SK-N-SH (cell line): ENCODE measurements at regions of chr15 and their contacts with region 1.

Region 1: DNA sequence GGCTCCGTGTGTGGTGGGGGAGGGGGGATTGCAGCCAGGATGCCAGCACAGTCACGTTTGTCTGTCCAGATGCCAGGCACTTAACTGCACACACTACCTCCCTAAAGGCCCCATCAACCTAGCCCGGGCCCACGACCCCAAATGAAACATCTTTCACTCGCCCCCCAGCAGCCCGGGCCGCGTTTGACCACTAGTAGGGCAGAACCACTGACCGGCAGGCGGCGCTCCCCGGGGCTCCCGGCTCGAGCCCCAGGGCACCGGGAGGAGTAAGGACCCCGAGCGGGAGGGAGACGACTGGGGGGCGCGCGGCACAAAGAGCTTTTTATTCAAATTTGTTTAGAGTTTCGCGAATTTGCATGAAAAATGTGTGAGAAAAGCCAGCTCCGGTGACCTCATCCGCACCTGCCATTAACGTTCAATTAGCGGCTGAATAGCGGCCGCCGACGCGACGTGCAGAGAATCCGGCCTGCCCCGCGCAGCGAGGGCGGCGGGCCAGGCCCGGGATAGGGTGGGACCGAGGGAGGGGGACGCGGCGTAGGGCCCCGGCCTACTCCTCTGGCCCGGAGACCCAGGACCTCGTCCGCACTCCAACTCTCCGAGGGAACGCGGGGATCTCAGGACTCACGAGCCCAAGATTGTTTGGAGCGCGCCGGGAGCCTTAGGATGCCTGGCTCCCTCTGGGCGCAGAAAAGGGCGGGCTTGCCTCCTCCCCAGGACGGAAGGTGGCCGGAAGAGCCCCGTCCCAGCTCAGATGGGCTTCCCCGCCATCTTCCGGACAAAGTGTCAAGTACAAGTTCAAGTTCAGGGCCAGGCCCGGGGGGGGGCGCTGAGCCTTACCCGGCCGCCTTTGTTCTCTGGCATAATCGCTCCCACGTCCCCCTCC is 64.9 kb upstream of the POLG start:
- DNase-seq: peak; percentile 92
- H3K4me3 ChIP-seq: peak overlapping the region; percentile 70 to 72
- H3K27ac ChIP-seq: peak overlapping the region; percentile 59 to 94
- H3K4me1 ChIP-seq: peaks cover 0 to 22% of the 10 kb centered on the region in 2 experiments; a peak in 2 of 4 replicates
- H3K27me3 ChIP-seq: no peaks in the 10 kb centered on the region
- CTCF ChIP-seq: peak; percentile 72
- EP300 ChIP-seq: no peak
- RAD21 ChIP-seq: peak; percentile 69

Region 2: GRCh38 chr15:89367485-89368451 is 31.7 kb before region 1 on chr15:
- CTCF ChIA-PET with region 1: interaction called, 766 read pairs
- POLR2A ChIA-PET with region 1: interaction called, 19 read pairs
- DNase-seq: peak; percentile 98
- H3K4me3 ChIP-seq: peak overlapping the region; percentile 52 to 64
- H3K27ac ChIP-seq: peak overlapping the region in 1 of 2 experiments; percentile 65; a peak in 1 of 4 replicates
- H3K4me1 ChIP-seq: peaks cover 0 to 59% of the 10 kb centered on the region in 2 experiments; a peak in 1 of 4 replicates
- H3K27me3 ChIP-seq: peaks cover 17% of the 10 kb centered on the region
- CTCF ChIP-seq: no peak
- EP300 ChIP-seq: no peak
- RAD21 ChIP-seq: no peak

Region 3: GRCh38 chr15:89377836-89378295 is 21.6 kb before region 1 on chr15:
- CTCF ChIA-PET with region 1: interaction called, 11 read pairs
- POLR2A ChIA-PET with region 1: interaction called, 6 read pairs
- DNase-seq: no peak
- H3K4me3 ChIP-seq: no peak overlapping the region
- H3K27ac ChIP-seq: no peak overlapping the region
- H3K4me1 ChIP-seq: peaks cover 0 to 34% of the 10 kb centered on the region in 2 experiments; a peak in 2 of 4 replicates
- H3K27me3 ChIP-seq: no peaks in the 10 kb centered on the region
- CTCF ChIP-seq: no peak
- EP300 ChIP-seq: no peak
- RAD21 ChIP-seq: no peak

Region 4: DNA sequence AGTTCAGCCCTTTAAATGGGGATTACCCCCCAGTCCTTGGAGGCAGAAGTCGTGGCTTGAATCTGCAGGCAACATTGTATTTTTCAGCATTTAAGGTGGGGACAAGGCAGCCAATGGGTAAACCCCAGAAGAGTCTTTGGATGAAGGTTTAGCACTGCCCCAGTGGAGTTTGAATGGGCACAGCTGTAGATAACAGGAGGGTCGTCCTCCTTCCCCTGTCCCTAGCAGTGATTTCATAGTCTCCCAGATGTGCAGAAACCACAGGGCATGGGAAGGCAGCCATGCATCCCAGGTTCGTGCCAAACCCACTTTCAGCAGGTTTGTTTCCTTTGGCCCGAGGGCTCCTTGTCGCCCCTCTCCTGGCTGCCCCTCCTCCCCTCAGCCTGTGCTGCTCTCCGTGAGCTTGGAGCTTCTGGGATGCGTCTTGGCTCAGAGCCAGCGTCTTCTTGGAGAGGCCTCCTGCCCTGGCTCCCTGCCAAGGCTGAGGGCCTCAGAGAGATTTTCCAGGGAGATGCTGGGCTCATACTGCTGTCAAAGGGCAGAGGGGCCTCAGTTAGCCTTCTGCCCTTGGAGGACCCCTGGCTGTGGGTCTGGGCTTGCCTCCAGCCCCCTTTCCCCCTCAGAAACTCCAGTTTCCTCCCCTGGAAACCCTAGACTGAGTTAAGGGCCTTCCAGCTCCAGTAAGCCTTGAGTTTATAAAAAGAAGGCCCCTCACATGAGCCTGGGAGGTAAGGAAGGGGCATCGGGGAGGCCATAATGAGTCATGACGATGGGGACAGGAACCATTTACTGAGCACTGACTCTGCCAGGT is 15.9 kb before region 1 on chr15:
- CTCF ChIA-PET with region 1: interaction called, 77 read pairs
- POLR2A ChIA-PET with region 1: interaction called, 4 read pairs
- DNase-seq: peak; percentile 81
- H3K4me3 ChIP-seq: no peak overlapping the region
- H3K27ac ChIP-seq: peak overlapping the region; percentile 40 to 92; a peak in 3 of 4 replicates
- H3K4me1 ChIP-seq: peaks cover 10 to 78% of the 10 kb centered on the region in 2 experiments
- H3K27me3 ChIP-seq: no peaks in the 10 kb centered on the region
- CTCF ChIP-seq: no peak
- EP300 ChIP-seq: peak; percentile 21 to 65; a peak in 2 of 4 replicates
- RAD21 ChIP-seq: peak; percentile 7; the same call in 1 of the 2 replicates

Region 5: DNA sequence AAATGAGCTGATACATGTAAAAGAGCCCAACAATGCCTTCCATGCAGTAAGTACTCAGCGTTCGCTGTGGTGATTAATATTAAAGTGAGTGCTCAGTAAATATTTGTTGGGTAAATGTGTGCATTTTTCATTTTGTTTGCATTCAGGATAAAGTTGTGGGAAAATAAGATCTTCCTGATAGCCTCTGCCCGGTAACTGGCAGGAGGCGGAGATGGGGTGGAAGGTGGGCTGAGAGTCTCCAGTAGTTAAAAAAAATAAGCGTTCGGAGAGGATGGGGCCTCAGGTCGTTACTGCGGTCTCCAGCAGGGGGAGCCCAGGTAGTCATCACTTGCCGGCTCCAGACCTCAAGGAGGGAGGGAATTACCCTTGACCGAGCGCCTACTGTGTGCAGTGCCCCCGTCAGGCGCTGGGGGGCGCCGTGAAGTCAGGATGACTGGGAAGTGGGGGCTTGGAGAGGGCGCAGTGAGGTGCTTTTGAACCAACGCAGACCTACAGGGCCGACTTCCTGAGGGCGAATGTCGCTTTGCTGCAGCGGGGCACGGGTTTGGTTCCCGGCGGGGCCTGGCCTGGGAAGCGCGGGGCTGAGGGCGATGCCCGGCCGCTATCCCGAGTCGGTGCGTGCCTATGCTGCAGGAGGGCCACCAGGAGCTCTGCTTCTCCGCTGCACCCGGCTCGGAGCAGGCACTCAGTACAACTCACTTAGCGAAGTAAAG is 16.8 kb after region 1 on chr15:
- CTCF ChIA-PET with region 1: interaction called, 32 read pairs
- POLR2A ChIA-PET with region 1: interaction called, 3 read pairs
- DNase-seq: peak; percentile 96
- H3K4me3 ChIP-seq: peak overlapping the region in 1 of 2 experiments; percentile 60; a peak in 1 of 4 replicates
- H3K27ac ChIP-seq: no peak overlapping the region
- H3K4me1 ChIP-seq: no peaks in the 10 kb centered on the region; a peak in 1 of 4 replicates
- H3K27me3 ChIP-seq: no peaks in the 10 kb centered on the region
- CTCF ChIP-seq: peak; percentile 90
- EP300 ChIP-seq: no peak
- RAD21 ChIP-seq: peak; percentile 57

Region 6: DNA sequence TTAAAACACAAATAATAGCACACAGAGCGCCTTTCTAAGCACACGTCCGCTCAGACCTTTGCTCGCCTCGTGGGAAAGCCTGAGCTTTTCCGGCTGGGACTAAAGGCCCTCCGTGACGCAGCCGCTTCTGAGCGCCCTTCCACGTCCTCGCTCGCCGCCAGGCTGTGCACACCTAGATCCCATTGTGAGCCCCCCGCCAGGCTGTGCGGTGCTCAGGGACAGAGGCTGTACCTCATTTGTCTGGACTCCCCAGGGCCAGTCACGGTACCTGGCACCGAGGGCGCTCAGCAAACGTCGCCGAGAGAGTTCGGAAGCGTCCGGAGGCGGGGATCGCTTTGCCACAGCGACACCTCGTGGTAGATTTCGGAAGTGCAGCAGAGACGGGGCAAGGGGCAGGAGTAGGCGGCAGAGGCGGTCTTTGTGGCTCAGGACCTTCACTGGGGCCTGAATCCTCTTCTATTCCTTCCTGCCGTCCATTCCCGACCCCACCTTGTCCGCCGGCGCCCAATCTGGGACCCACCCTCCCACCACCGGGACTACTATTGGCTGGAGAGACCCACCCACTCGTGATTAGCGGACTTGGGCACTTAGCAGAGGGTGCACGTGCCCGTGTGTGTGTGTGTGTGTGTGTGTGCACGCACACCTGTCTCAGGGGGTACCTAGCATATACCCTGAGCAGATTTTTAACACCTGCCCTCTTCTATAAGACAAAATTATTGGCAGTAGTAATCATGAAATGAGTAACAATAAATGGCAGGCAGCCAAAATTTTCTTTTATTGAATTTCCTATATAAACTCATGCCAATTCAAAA is 31.3 kb after region 1 on chr15:
- CTCF ChIA-PET with region 1: interaction called, 31 read pairs
- POLR2A ChIA-PET with region 1: no interaction called
- DNase-seq: peak; percentile 94
- H3K4me3 ChIP-seq: peak overlapping the region in 1 of 2 experiments; percentile 40; a peak in 1 of 4 replicates
- H3K27ac ChIP-seq: no peak overlapping the region
- H3K4me1 ChIP-seq: peaks cover 6 to 8% of the 10 kb centered on the region in 2 experiments; a peak in 3 of 4 replicates
- H3K27me3 ChIP-seq: no peaks in the 10 kb centered on the region
- CTCF ChIP-seq: peak; percentile 86
- EP300 ChIP-seq: no peak
- RAD21 ChIP-seq: peak; percentile 87

Region 7: GRCh38 chr15:89442671-89443307 is 43.3 kb after region 1 on chr15:
- CTCF ChIA-PET with region 1: interaction called, 18 read pairs
- POLR2A ChIA-PET with region 1: no interaction called
- DNase-seq: peak; percentile 88
- H3K4me3 ChIP-seq: peak overlapping the region in 1 of 2 experiments; percentile 17; a peak in 1 of 4 replicates
- H3K27ac ChIP-seq: no peak overlapping the region
- H3K4me1 ChIP-seq: peaks cover 0 to 43% of the 10 kb centered on the region in 2 experiments; a peak in 1 of 4 replicates
- H3K27me3 ChIP-seq: no peaks in the 10 kb centered on the region
- CTCF ChIP-seq: peak; percentile 84
- EP300 ChIP-seq: no peak
- RAD21 ChIP-seq: peak; percentile 82